ENCODE measurements at regions of chr10 and their contacts with region 1.

Region 1: DNA sequence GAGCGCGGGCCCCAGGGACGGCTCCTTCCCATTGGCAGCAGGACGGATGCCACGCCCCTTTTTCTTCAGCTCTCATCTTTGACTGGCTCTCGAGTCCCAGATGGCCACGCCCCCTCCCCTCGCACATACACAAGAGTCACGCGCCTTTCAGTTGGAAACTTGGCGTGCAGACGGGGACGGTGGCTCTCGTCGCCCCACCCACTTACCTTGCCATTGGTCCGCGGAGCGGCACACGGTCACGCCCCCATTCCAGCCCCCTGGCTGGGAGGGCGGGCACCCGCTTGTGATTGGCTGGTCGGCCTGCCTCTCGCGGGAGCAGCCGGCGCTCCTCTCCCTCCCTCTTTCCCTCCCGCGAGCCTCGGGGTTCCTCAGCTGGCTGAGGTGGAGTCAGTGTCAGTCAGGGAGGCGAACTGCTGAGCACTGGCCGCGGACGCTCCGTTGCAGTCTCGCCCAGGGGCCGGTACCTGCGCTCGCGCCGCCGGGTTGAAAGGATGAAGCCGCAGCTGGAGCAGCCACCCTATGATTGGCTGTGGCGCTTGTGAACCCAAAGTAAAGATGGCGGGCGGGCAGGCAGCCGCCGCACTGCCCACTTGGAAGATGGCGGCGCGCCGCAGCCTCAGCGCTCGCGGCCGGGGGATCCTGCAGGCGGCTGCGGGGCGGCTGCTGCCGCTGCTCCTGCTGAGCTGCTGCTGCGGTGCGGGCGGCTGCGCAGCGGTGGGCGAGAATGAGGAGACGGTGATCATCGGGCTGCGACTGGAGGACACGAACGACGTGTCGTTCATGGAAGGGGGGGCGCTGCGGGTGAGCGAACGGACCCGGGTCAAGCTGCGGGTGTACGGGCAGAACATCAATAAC is at the start of gene CNNM2:
- DNase-seq: peak; percentile 100
- H3K4me3 ChIP-seq: peak within 1 kb of the TSS; percentile 84 to 91
- H3K4me3 Mint-ChIP-seq: peak within 1 kb of the TSS; percentile 94 to 96 (median 95)
- H3K27ac ChIP-seq: peak within 1 kb of the TSS; percentile 72
- H3K27ac Mint-ChIP-seq: peak within 1 kb of the TSS; percentile 92 to 98 (median 96)
- H3K4me1 ChIP-seq: peaks cover 53% of the 10 kb centered on the region
- H3K4me1 Mint-ChIP-seq: peaks cover 35 to 59% (median 51%) of the 10 kb centered on the region in 4 donors
- H3K27me3 ChIP-seq: no peaks in the 10 kb centered on the region
- H3K27me3 Mint-ChIP-seq: peaks cover 4 to 6% of the 10 kb centered on the region in 2 donors
- total RNA-seq, gene CNNM2: 11.9 to 14.4 TPM

Region 2: DNA sequence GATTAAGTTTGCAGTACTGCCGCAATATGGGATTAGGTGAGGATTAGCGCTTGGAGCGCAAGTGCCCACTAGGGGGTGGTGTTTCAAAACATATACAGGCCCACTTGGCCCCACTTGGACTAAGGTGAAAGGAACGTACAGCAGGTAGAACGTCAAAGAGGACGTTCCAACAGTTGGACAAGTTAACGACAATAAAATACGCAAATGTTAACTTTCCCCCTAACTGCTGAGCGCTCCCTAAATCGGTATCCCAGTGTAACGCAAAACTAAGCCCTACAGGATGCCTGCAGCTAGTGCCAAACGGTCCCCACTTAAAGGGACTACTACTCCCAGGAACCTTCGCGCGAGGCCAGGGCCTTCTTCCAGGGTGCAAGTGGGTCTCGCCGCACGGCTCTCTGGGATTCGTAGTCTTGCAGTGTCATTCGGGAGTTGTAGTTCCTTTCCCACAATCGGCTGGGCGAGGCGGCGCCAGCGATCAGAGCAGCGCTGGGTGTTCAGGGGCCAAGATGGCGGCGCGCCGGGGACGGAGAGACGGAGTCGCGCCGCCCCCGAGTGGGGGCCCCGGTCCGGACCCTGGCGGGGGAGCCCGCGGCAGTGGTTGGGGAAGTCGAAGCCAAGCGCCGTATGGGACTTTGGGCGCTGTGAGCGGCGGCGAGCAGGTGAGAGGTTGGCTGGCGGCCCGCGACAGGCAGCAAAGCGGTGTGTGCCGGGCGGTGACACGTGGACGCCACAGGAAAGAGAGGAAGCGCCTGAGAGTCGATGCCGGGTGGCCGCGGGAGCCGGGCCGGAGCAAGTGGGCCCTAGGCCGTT is 785.4 kb before region 1 on chr10 and contains the start of gene PPRC1:
- CTCF ChIA-PET with region 1: no interaction called
- POLR2A ChIA-PET with region 1: no interaction called
- intact Hi-C with region 1: no loop called
- DNase-seq: peak; percentile 97 to 99 (median 97)
- H3K4me3 ChIP-seq: peak within 1 kb of the TSS; percentile 55 to 61
- H3K4me3 Mint-ChIP-seq: peak within 1 kb of the TSS; percentile 92 to 99 (median 96)
- H3K27ac ChIP-seq: peak within 1 kb of the TSS; percentile 88
- H3K27ac Mint-ChIP-seq: peak within 1 kb of the TSS; percentile 93 to 99 (median 96)
- H3K4me1 ChIP-seq: peaks cover 38% of the 10 kb centered on the region
- H3K4me1 Mint-ChIP-seq: peaks cover 27 to 50% (median 38%) of the 10 kb centered on the region in 4 donors
- H3K27me3 ChIP-seq: no peaks in the 10 kb centered on the region
- H3K27me3 Mint-ChIP-seq: no peaks in the 10 kb centered on the region
- total RNA-seq, gene PPRC1: 38.9 to 39.8 TPM

Region 3: DNA sequence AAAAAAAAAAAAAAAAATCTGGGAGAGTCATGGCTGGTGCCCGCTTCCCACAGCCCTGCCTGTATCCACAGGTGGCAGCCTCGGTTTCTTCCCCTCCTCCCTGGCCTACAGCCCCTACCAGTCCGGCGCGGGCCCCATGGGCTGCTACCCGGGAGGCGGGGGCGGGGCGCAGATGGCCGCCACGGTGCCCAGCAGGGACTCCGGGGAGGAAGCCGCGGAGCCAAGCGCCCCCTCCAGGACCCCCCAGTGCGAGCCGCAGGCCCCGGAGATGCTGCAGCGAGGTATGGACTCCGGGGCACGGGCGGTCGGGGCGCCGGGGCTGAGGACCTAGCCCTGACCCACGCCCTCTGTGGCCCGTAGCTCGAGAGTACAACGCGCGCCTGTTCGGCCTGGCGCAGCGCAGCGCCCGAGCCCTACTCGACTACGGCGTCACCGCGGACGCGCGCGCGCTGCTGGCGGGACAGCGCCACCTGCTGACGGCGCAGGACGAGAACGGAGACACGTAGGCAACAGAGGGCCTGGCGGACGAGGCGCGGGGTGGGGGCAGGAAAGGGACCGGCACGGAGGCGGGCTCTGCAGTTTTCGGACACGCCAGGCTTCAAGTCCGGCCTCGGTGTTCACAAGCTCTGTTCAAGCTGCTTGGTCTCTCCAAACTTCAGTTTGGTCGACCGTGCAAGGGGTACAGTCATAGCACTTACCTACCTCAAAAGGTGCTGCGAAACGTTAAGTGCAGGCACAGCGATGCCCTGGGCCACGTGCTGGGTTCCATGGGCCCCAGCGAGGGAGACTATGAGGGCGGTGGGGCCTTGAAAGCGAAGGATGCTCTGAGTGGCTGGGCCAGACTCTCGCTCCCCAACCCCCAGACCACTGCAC is 518.7 kb before region 1 on chr10:
- CTCF ChIA-PET with region 1: no interaction called
- POLR2A ChIA-PET with region 1: no interaction called
- intact Hi-C with region 1: loop called (anchors 5 kb)
- DNase-seq: peak; percentile 86 to 90 (median 87)
- H3K4me3 ChIP-seq: peak overlapping the region in 1 of 2 donors; percentile 49
- H3K4me3 Mint-ChIP-seq: peak overlapping the region; percentile 53 to 81 (median 74)
- H3K27ac ChIP-seq: peak overlapping the region; percentile 100
- H3K27ac Mint-ChIP-seq: peak overlapping the region; percentile 89 to 100 (median 100)
- H3K4me1 ChIP-seq: peaks cover 44% of the 10 kb centered on the region
- H3K4me1 Mint-ChIP-seq: peaks cover 19 to 68% (median 32%) of the 10 kb centered on the region in 4 donors
- H3K27me3 ChIP-seq: no peaks in the 10 kb centered on the region
- H3K27me3 Mint-ChIP-seq: no peaks in the 10 kb centered on the region

Region 4: DNA sequence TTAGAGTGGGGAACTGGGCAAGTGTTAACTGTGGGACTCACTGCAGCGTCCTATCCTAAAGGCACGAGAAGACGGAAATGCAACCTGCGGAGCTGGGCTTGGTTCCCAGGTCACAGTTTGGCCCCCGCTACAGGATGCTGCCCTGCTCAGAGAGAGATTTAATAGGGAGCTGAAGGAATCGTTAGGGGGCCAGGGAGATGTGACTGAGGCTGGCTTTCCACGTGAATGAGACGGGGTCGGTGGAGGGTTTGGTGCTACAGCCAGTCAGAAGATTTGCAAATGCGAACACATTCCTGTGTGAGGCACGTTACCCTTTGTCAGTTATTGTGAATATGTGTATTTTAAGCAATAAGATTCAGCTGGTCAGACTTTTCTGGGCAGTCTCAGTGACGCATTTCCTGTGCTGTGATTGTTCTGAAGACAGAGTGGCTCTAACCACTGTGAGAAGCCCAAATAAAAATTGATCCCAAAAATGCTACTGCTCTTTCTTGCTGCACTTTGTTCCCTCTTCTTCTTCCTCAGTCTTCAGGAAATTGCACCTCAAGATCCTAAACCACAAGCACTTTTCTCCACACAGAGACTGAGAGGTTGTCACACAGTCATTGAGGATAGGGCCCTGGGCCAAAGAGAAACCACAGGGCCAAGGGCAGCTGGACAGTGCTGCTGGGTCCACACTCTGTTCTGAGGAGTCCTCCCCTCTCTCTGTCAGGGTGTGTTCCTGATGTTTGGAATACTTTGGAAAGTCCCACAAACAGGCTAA is 102.2 kb before region 1 on chr10:
- CTCF ChIA-PET with region 1: no interaction called
- POLR2A ChIA-PET with region 1: no interaction called
- intact Hi-C with region 1: no loop called
- DNase-seq: no peak
- H3K4me3 ChIP-seq: no peak overlapping the region
- H3K4me3 Mint-ChIP-seq: no peak overlapping the region
- H3K27ac ChIP-seq: no peak overlapping the region
- H3K27ac Mint-ChIP-seq: peak overlapping the region in 1 of 7 donors; percentile 42
- H3K4me1 ChIP-seq: no peaks in the 10 kb centered on the region
- H3K4me1 Mint-ChIP-seq: peaks cover 0 to 6% (median 0%) of the 10 kb centered on the region in 4 donors
- H3K27me3 ChIP-seq: no peaks in the 10 kb centered on the region
- H3K27me3 Mint-ChIP-seq: no peaks in the 10 kb centered on the region

Region 5: GRCh38 chr10:102835007-102835482 is 83.1 kb before region 1 on chr10:
- CTCF ChIA-PET with region 1: interaction called, 13 read pairs
- POLR2A ChIA-PET with region 1: no interaction called
- intact Hi-C with region 1: loop called (anchors 1 kb)
- DNase-seq: peak; percentile 63 to 70 (median 66)
- H3K4me3 ChIP-seq: no peak overlapping the region
- H3K4me3 Mint-ChIP-seq: no peak overlapping the region
- H3K27ac ChIP-seq: no peak overlapping the region
- H3K27ac Mint-ChIP-seq: no peak overlapping the region
- H3K4me1 ChIP-seq: no peaks in the 10 kb centered on the region
- H3K4me1 Mint-ChIP-seq: peaks cover 0 to 1% (median 0%) of the 10 kb centered on the region in 4 donors
- H3K27me3 ChIP-seq: no peaks in the 10 kb centered on the region
- H3K27me3 Mint-ChIP-seq: peaks cover 3 to 12% of the 10 kb centered on the region in 2 donors

Region 6: GRCh38 chr10:103069453-103070331 is 151.5 kb after region 1 on chr10:
- CTCF ChIA-PET with region 1: interaction called, 61 read pairs
- POLR2A ChIA-PET with region 1: interaction called, 21 read pairs
- intact Hi-C with region 1: loop called (anchors 1 kb)
- DNase-seq: peak; percentile 65 to 72 (median 70)
- H3K4me3 ChIP-seq: no peak overlapping the region
- H3K4me3 Mint-ChIP-seq: peak overlapping the region in 5 of 8 donors; percentile 1 to 61 (median 24)
- H3K27ac ChIP-seq: no peak overlapping the region
- H3K27ac Mint-ChIP-seq: peak overlapping the region; percentile 46 to 79 (median 67)
- H3K4me1 ChIP-seq: peaks cover 24% of the 10 kb centered on the region
- H3K4me1 Mint-ChIP-seq: peaks cover 14 to 31% (median 22%) of the 10 kb centered on the region in 4 donors
- H3K27me3 ChIP-seq: no peaks in the 10 kb centered on the region
- H3K27me3 Mint-ChIP-seq: no peaks in the 10 kb centered on the region

Region 7: DNA sequence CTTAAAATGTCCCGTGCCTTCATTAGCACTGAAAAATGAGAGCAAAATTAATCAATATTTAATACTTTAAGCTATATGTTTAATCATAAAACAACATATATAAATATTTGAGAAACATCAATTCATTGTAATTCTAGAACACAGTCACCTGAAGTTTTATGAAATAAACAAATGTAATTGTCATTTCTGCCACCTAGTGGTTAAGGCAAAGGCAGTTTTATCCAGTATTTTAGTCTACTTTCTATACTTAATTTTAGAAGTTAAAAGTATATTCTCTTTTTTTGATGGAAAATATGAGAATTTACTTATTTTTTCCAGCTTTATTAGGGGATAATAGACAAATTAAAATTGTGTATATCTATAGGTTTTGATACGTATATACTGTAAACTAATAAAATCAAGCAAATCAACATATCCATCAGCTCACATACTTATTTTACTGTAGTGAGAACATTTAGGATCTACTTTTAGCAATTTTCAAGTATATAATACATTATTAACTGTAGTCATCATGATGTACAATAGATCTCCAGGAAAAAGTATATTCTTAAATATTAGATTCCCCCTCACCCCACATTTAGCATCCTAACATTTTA is 415.8 kb after region 1 on chr10:
- CTCF ChIA-PET with region 1: interaction called, 10 read pairs
- POLR2A ChIA-PET with region 1: interaction called, 12 read pairs
- intact Hi-C with region 1: loop called (anchors 1 kb)
- DNase-seq: peak in 3 of 5 donors; percentile 7 to 22 (median 13)
- H3K4me3 ChIP-seq: no peak overlapping the region
- H3K4me3 Mint-ChIP-seq: no peak overlapping the region
- H3K27ac ChIP-seq: no peak overlapping the region
- H3K27ac Mint-ChIP-seq: no peak overlapping the region
- H3K4me1 ChIP-seq: no peaks in the 10 kb centered on the region
- H3K4me1 Mint-ChIP-seq: no peaks in the 10 kb centered on the region
- H3K27me3 ChIP-seq: no peaks in the 10 kb centered on the region
- H3K27me3 Mint-ChIP-seq: no peaks in the 10 kb centered on the region

Measured in CD4-positive, alpha-beta memory T cell (primary cell).